GM12878 (cell line): ENCODE measurements at regions of chr20 and their contacts with region 1.

Region 1: DNA sequence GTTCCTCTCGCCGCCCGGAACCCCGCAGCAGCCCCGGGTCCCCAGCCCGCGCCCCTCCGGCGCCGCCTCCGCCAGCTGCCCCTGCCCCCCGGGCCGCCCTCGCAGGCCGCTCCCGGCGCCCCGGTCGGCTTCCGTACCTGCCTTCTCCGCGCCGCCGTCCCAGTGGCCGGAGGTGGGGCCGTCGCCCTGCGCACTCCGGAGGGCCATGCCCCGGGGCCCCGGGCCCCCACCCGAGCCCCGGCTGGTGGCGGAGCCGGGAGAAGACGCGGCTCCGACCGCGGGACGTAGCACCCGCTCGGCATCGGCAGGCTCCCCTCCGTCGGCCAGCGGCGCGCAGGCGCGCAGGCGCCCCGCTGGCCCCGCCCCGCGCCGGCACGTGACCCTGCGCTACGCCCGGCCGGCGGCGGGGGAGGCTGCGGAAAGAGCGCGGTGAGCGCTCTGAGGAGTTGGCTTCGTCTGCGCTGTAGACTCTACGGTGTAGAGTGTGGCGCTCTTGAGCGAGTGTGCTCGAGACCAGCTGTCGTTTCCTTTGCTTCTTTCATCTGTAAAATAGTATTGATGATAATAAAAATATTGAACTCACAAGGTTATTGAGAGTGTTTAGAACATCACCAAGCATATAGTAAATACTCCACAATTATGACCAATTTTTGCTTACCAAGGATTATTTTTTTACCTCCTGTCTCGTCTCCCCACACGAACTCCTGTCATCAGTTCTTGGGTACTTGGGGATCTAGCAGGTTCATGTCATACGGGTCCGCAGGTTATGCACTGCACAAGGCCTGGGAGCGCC is at the start of gene TBC1D20:
- DNase-seq: peak; percentile 40
- ATAC-seq: peak; percentile 97
- H3K4me3 ChIP-seq: peak within 1 kb of the TSS; percentile 91
- H3K27ac ChIP-seq: peak within 1 kb of the TSS; percentile 55
- H3K4me1 ChIP-seq: peaks cover 5% of the 10 kb centered on the region
- H3K27me3 ChIP-seq: no peaks in the 10 kb centered on the region
- CTCF ChIP-seq: peak in 2 of 3 experiments; percentile 9 to 39; a peak in 1 of 6 replicates
- EP300 ChIP-seq: no peak
- POLR2A ChIP-seq: peak; percentile 80
- RAD21 ChIP-seq: no peak
- polyA plus RNA-seq, gene TBC1D20: 4.3 to 6.8 TPM

Region 2: GRCh38 chr20:60035-60918 is 402.1 kb before region 1 on chr20:
- CTCF ChIA-PET with region 1: no interaction called
- POLR2A ChIA-PET with region 1: no interaction called
- RAD21 ChIA-PET with region 1: no interaction called
- SMC1A ChIA-PET with region 1: no interaction called
- in situ Hi-C with region 1: no loop called
- intact Hi-C with region 1: no loop called
- DNase-seq: no peak
- ATAC-seq: no peak
- H3K4me3 ChIP-seq: no peak overlapping the region
- H3K27ac ChIP-seq: no peak overlapping the region
- H3K4me1 ChIP-seq: no peaks in the 10 kb centered on the region
- H3K27me3 ChIP-seq: no peaks in the 10 kb centered on the region
- CTCF ChIP-seq: no peak
- EP300 ChIP-seq: no peak
- POLR2A ChIP-seq: no peak
- RAD21 ChIP-seq: no peak

Region 3: DNA sequence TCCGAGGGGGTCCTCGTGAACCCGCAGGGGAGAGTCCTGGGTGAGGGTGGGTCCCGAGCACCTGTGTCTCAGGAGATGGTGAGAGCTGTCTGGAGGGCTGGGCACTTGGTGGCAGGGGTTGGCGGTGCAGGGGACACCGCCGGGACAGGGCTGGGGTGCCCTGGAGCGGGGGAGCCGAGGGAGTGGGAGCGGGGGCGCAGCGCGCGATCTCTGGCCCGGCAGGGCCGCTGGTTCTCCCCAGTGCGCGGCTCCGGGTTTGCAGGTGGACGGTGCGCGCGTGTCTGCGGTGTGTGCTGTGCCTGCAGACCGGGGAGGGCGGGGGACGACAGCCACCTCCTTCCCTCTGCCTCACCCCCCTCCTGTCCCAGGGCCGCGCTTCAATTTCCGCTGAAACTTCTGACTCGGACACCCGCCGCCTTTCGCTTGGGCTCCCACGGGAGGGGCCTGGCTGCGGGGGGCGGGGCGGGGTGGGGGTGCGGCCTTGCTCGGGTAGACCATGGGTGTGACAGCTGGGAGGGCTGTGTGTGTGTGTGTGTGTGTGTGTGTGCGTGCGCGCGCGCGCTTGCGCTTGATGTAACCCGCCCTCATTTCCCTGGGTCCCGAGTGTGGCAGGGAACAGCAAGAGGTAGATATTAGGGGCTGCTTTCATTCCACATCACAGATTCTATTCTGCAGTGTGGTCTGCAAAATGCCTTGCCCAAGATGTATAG is 80.7 kb before region 1 on chr20:
- CTCF ChIA-PET with region 1: no interaction called
- POLR2A ChIA-PET with region 1: no interaction called
- RAD21 ChIA-PET with region 1: no interaction called
- SMC1A ChIA-PET with region 1: interaction called, 3 read pairs
- in situ Hi-C with region 1: no loop called
- intact Hi-C with region 1: loop called (anchors 2 kb)
- DNase-seq: peak; percentile 48
- ATAC-seq: peak; percentile 85
- H3K4me3 ChIP-seq: peak overlapping the region; percentile 98
- H3K27ac ChIP-seq: 0 out of 2 replicates have a peak overlapping the region, but pooled peaks have one; percentile 22
- H3K4me1 ChIP-seq: peaks cover 10% of the 10 kb centered on the region
- H3K27me3 ChIP-seq: no peaks in the 10 kb centered on the region
- CTCF ChIP-seq: no peak
- EP300 ChIP-seq: no peak
- POLR2A ChIP-seq: peak; percentile 79
- RAD21 ChIP-seq: no peak

Region 4: DNA sequence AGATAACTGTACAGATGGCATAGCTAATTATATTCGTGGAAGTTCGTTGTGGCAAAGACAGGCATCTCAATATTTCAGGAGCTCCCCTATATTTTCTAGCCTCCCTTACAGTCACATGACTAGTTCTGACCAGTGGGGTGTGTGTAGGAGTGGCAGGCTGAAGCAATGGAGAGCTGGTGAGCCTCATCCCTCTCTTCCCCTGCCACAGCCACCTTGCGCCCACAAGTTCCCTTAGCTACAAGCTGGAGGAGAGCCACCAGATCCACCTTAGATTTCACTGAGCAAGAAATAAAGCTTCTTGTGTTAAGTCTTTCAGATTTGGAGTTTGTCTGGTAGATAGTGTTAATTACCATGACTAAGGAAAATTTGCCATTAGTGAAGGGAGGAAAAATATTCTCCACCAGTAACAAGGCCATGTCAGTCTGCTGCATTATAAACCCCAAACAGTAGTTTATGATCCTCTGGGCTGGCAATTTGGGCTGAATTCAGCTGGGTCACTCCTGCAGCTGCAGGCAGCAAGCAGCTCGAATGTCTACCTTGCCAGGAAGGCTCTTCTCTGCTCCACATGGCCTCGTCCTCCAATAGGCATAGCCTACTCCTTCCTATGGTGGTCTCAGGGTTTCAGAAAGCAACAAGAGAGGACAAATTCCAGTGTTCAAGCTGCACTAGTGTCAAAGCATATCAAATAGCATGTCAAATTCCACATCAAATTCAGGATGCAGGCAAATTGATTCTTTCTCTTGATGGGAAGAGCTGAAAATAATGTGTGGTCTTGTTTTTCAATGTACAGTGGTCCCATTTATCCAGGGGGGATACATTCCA is 61.7 kb before region 1 on chr20:
- CTCF ChIA-PET with region 1: no interaction called
- POLR2A ChIA-PET with region 1: no interaction called
- RAD21 ChIA-PET with region 1: no interaction called
- SMC1A ChIA-PET with region 1: no interaction called
- in situ Hi-C with region 1: no loop called
- intact Hi-C with region 1: no loop called
- DNase-seq: no peak
- ATAC-seq: peak; percentile 73
- H3K4me3 ChIP-seq: no peak overlapping the region
- H3K27ac ChIP-seq: no peak overlapping the region
- H3K4me1 ChIP-seq: no peaks in the 10 kb centered on the region
- H3K27me3 ChIP-seq: no peaks in the 10 kb centered on the region
- CTCF ChIP-seq: no peak
- EP300 ChIP-seq: no peak
- POLR2A ChIP-seq: no peak
- RAD21 ChIP-seq: no peak

Region 5: DNA sequence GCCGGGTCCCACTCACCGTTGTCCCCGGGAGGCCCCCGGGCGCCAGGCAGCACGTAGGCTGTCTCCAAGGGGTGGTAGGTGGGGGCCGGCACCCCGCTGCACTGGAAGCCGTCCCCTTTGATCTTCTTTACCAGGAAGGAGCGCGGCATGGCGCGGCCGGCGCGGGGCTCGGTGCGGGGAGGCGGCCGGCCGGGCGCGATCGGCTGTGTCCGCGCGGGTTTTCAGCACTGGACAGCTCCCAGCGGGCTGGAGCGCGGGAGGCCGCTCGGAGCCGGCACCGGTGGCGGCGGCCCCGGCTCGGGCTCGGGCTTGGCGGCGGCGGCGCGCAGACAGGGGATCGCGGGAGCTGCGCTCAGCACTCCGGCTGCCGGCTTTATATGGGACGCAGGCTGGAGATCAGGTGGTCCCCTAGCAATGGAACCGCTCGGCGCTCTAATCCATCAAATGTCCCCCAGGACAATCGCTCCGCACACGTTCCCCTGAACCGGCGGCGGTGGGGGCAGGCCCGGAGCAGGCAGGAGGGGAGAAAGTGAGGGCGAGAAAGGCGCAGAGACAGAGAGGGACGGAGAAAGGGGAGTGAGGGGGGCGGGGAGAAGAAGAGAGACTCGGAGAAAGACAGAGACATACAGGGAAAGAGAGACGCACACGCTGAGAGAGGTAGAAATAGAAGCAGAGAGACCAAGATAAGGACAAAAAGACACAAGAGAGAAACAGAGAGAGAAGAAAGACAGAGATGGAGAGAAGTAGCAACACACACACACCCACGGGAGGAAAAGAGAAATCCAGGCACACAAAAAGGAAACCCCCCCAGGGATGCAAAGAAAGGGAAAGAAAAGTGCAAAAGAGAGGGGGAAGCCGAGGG is 213.3 kb after region 1 on chr20 and contains the start of gene SCRT2:
- CTCF ChIA-PET with region 1: no interaction called
- POLR2A ChIA-PET with region 1: no interaction called
- RAD21 ChIA-PET with region 1: no interaction called
- SMC1A ChIA-PET with region 1: no interaction called
- in situ Hi-C with region 1: no loop called
- intact Hi-C with region 1: no loop called
- DNase-seq: no peak
- ATAC-seq: peak; percentile 47
- H3K4me3 ChIP-seq: no peak within 1 kb of the TSS
- H3K27ac ChIP-seq: no peak within 1 kb of the TSS
- H3K4me1 ChIP-seq: peaks cover 4% of the 10 kb centered on the region; the same call in 1 of the 2 replicates
- H3K27me3 ChIP-seq: peaks cover 5 to 8% of the 10 kb centered on the region in 2 experiments; a peak in 3 of 4 replicates
- CTCF ChIP-seq: no peak
- EP300 ChIP-seq: no peak
- POLR2A ChIP-seq: no peak
- RAD21 ChIP-seq: no peak
- polyA plus RNA-seq, gene SCRT2: not detected